ENCODE measurements at regions of chr5 and their contacts with region 1.

Region 1: GRCh38 chr5:157148734-157149615 is 6.3 kb upstream of the MED7 start:
- DNase-seq: peak; percentile 87
- H3K4me3 Mint-ChIP-seq: peak overlapping the region; percentile 3
- H3K27ac Mint-ChIP-seq: peak overlapping the region; percentile 68
- H3K4me1 Mint-ChIP-seq: peaks cover 47% of the 10 kb centered on the region
- H3K27me3 Mint-ChIP-seq: no peaks in the 10 kb centered on the region

Region 2: GRCh38 chr5:157167214-157167621 is 18.2 kb after region 1 on chr5:
- CTCF ChIA-PET with region 1: interaction called, 12 read pairs
- POLR2A ChIA-PET with region 1: interaction called, 25 read pairs
- intact Hi-C with region 1: loop called (anchors 1 kb)
- DNase-seq: peak; percentile 42
- H3K4me3 Mint-ChIP-seq: peak overlapping the region; percentile 47
- H3K27ac Mint-ChIP-seq: peak overlapping the region; percentile 91
- H3K4me1 Mint-ChIP-seq: peaks cover 88% of the 10 kb centered on the region
- H3K27me3 Mint-ChIP-seq: no peaks in the 10 kb centered on the region

Region 3: DNA sequence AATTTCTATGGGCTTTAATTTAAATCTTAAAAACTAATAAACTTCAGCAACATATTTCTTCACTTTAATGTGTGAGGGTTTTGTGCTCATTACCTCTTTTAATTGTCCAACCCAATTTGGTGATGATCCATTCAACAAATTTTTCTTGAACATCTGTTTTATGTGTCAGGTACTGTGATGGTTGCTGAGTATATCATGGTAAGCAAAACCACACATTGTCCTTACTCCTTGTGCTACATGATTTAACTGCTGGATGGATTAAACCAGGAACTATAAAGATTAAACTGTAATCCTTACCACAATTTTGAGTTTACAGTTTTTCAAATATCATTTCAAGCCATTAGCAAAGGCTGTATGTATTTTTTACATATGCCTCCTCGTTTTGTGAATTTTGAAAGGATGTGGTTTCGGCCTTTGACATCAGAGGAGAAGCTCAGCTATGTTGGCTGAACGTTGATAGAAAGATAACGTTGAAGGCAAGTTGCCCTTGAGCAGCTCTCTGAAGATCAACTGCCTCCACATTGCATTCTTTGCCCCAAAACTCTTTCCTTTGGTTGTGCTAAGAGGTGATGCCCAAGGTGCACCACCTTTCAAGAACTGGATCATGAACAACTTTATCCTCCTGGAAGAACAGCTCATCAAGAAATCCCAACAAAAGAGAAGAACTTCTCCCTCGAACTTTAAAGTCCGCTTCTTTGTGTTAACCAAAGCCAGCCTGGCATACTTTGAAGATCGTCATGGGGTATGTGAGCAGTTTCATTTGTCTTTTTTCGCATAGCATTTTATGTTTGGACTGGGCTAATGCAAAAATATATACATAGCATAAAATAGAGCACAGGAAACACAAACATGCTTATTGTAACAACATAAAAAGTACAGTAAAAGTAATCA is 31.6 kb after region 1 on chr5 and contains the start of gene ITK:
- CTCF ChIA-PET with region 1: interaction called, 32 read pairs
- POLR2A ChIA-PET with region 1: interaction called, 76 read pairs
- intact Hi-C with region 1: loop called (anchors 1 kb)
- DNase-seq: peak; percentile 58
- H3K4me3 Mint-ChIP-seq: peak within 1 kb of the TSS; percentile 99
- H3K27ac Mint-ChIP-seq: peak within 1 kb of the TSS; percentile 100
- H3K4me1 Mint-ChIP-seq: peaks cover 45% of the 10 kb centered on the region
- H3K27me3 Mint-ChIP-seq: no peaks in the 10 kb centered on the region
- total RNA-seq, gene ITK: 236 to 240 TPM

Region 4: DNA sequence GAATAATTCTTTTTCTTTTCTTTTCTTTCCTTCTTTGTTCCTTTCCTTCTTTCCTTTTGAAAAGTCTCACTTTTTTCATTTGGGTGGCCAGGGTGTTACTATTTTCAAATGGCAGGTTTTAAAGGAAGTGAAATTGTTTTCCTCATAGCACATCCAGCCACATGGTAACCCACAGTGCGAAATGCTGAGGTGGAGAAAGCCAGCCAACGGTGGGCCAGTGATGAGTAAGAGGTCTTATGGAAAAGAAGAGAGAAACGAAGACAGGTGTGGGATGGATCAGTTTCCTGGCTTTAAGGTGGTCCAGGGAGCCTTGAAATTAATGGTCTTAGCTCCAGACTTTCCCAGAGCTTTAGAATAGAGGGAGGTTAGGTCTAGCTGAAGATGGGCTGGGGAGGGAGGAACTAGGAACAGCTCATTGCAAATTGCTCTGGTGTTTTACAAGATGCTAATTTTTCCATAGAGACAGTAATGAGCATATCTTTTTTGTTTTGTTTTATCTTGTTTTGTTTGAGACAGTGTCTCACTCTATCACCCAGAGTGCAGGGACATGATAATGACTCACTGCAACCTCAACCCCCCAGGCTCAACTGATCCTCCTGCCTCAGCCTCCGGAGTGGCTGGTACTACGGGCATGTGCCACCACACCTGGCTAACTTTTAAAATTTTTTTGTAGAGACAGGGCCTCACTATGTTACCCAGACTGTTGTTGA is 49.5 kb after region 1 on chr5:
- CTCF ChIA-PET with region 1: interaction called, 20 read pairs
- POLR2A ChIA-PET with region 1: interaction called, 3 read pairs
- intact Hi-C with region 1: no loop called
- DNase-seq: peak; percentile 77
- H3K4me3 Mint-ChIP-seq: peak overlapping the region; percentile 53
- H3K27ac Mint-ChIP-seq: peak overlapping the region; percentile 95
- H3K4me1 Mint-ChIP-seq: peaks cover 94% of the 10 kb centered on the region
- H3K27me3 Mint-ChIP-seq: no peaks in the 10 kb centered on the region

Region 5: GRCh38 chr5:157312492-157312891 is 163.5 kb after region 1 on chr5:
- CTCF ChIA-PET with region 1: interaction called, 34 read pairs
- POLR2A ChIA-PET with region 1: no interaction called
- intact Hi-C with region 1: loop called (anchors 1 kb)
- DNase-seq: peak; percentile 74
- H3K4me3 Mint-ChIP-seq: no peak overlapping the region
- H3K27ac Mint-ChIP-seq: peak overlapping the region; percentile 82
- H3K4me1 Mint-ChIP-seq: peaks cover 31% of the 10 kb centered on the region
- H3K27me3 Mint-ChIP-seq: no peaks in the 10 kb centered on the region

Measured in activated CD4-positive, alpha-beta memory T cell treated with anti-CD3 and anti-CD28 coated beads for 36 hours (primary cell).